ENCODE measurements at regions of chr18 and their contacts with region 1.

Region 1: GRCh38 chr18:2917259-2918047 is 70.6 kb downstream of the EMILIN2 start:
- DNase-seq: no peak
- ATAC-seq: no peak
- H3K4me3 ChIP-seq: no peak overlapping the region
- H3K27ac ChIP-seq: no peak overlapping the region
- H3K4me1 ChIP-seq: no peaks in the 10 kb centered on the region
- H3K27me3 ChIP-seq: no peaks in the 10 kb centered on the region

Region 2: DNA sequence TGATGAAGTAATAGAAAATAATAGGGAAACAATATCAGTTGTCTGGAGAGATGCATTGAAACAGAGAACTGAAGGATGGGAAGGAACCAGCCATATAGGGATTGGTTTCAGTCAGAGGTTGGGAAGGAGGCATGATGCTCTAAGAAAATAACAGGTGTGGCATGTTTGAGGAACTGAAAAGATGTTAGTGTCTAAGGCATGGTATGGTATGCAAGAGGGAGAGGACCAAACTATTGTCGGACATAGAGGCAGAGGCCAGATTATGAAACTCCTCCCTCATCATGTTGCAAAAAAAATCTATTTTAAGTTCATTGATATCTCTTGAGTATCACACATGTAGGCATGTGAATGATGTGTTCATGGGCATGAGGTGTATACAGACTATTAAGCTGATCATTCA is 119.5 kb before region 1 on chr18:
- intact Hi-C with region 1: loop called in 1 of 4 experiments (anchors 10 kb)
- DNase-seq: no peak
- ATAC-seq: no peak
- H3K4me3 ChIP-seq: no peak overlapping the region
- H3K27ac ChIP-seq: no peak overlapping the region
- H3K4me1 ChIP-seq: no peaks in the 10 kb centered on the region
- H3K27me3 ChIP-seq: no peaks in the 10 kb centered on the region

Region 3: DNA sequence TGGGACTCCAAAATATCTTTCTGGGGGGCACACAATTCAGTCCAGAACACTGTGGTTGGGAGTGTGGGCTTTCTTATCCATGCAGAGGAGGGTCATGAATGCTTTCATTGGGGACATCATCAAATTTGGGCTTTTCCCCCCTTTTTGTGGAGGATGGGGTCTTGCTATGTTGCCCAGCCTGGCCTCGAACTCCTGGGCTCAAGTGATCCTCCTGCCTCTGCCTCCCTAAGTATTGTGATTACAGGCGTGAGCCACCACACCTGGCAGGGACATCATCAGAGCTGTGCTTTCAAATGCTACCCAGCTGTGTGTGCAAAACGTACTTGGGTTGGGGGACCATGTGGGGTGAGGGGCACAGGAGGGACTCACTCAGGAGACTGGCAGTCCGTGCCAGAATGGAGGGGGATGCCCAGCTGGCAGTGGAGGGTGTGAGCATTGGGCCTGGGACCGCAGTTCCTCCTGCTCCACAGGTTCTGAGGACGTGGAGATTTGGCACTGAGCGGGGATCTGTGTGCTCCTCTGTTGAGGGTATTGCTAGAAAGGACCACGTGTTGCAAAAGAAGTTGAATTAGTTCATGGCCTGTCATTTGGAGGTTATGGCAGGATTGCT is 46.2 kb before region 1 on chr18:
- intact Hi-C with region 1: no loop called
- DNase-seq: no peak
- ATAC-seq: no peak
- H3K4me3 ChIP-seq: no peak overlapping the region
- H3K27ac ChIP-seq: no peak overlapping the region
- H3K4me1 ChIP-seq: no peaks in the 10 kb centered on the region
- H3K27me3 ChIP-seq: no peaks in the 10 kb centered on the region

Region 4: DNA sequence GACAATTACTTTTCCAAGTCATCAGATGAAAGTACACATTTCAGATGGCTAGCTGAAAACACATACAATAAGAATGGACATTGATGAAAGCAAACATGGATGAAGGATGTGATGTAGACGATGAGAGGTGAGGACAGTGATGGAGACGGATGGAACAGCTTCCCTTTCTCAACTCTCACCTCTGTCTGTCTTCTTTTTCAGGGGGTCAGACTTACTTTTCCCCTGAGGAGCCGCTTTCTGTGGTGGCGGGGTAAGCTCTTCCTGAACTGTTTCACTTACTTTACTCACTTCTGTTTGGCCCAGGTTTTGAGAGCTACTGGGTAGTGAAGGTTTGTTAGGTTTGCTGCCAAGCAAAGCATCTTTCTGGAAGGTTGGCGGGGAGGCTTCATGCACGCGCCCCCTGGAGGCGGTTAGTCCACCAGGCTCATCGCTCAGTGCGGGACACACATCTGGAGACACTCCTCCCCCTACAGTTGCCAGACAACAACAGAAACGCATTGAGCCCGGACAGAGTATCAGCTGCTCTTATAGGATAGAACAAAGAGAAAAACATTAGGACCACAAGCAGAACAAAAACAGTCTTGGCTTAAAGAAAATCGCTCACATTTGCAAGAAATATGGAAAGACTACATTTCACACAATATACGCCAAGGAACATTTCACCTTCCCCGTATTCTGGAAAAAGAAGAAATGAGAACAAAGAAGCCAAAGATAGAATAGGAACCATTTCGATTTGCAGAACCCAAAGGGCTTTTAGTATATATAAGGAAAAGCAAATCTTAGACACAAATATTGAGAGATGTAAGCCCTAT is 211.8 kb after region 1 on chr18:
- intact Hi-C with region 1: loop called in 1 of 4 experiments (anchors 10 kb)
- DNase-seq: peak; percentile 83 to 93 (median 90)
- ATAC-seq: peak; percentile 92 to 95
- H3K4me3 ChIP-seq: no peak overlapping the region
- H3K27ac ChIP-seq: no peak overlapping the region
- H3K4me1 ChIP-seq: no peaks in the 10 kb centered on the region
- H3K27me3 ChIP-seq: no peaks in the 10 kb centered on the region